AG04449 (cell line): ENCODE measurements at regions of chr15 and their contacts with region 1.

Region 1: GRCh38 chr15:78811124-78811824 is at the start of gene ADAMTS7:
- DNase-seq: no peak
- H3K4me3 ChIP-seq: peak within 1 kb of the TSS; percentile 65
- CTCF ChIP-seq: peak; percentile 71

Region 2: GRCh38 chr15:78822514-78822913 is 11.2 kb after region 1 on chr15:
- CTCF ChIA-PET with region 1: interaction called, 15 read pairs
- POLR2A ChIA-PET with region 1: interaction called, 3 read pairs
- DNase-seq: no peak
- H3K4me3 ChIP-seq: no peak overlapping the region
- CTCF ChIP-seq: no peak

Region 3: GRCh38 chr15:78850941-78851755 is 39.9 kb after region 1 on chr15:
- CTCF ChIA-PET with region 1: interaction called, 10 read pairs
- POLR2A ChIA-PET with region 1: no interaction called
- DNase-seq: no peak
- H3K4me3 ChIP-seq: no peak overlapping the region
- CTCF ChIP-seq: no peak